ENCODE measurements at regions of chr7 and their contacts with region 1.

Region 1: DNA sequence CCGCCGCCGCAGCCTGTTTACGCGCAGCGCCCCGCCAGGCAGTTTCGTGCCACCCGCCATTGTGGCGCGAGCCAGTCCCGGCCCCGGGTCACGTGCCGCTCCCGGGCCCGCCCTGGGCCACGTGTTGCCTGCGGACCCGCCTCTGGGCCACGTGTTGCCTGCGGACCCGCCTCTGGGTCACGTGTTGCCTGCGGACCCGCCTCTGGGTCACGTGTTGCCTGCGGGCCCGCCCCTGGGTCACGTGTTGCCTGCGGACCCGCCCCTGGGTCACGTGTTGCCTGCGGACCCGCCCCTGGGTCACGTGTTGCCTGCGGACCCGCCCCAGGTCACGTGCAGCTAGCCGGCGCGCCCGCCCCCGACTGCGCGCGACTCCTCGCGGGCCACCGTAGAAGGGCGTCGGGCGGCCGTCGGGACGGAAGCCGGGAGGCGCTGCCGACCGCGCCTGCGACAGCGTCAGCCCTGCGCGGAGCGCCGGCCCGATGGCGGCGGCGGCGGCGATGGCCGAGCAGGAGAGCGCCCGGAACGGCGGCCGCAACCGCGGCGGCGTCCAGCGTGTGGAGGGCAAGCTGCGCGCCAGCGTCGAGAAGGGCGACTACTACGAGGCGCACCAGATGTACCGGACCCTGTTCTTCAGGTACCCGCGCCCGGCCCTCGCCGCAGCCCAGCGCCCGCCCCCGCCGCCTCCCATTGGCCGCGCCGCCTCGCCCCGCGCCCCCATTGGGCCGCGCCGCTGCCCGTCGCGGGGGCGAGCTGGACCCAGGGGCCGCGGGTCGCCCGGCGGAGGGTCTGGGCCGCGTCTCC is at the start of gene GET4:
- DNase-seq: peak; percentile 88 to 98
- H3K4me3 ChIP-seq: peak within 1 kb of the TSS; percentile 88 to 91
- H3K27ac ChIP-seq: peak within 1 kb of the TSS; percentile 78 to 86
- H3K4me1 ChIP-seq: peaks cover 5 to 23% of the 10 kb centered on the region in 2 donors
- H3K27me3 ChIP-seq: no peaks in the 10 kb centered on the region
- CTCF ChIP-seq: peak; percentile 19 to 45 (median 42)
- total RNA-seq, gene GET4: 4.2 TPM

Region 2: DNA sequence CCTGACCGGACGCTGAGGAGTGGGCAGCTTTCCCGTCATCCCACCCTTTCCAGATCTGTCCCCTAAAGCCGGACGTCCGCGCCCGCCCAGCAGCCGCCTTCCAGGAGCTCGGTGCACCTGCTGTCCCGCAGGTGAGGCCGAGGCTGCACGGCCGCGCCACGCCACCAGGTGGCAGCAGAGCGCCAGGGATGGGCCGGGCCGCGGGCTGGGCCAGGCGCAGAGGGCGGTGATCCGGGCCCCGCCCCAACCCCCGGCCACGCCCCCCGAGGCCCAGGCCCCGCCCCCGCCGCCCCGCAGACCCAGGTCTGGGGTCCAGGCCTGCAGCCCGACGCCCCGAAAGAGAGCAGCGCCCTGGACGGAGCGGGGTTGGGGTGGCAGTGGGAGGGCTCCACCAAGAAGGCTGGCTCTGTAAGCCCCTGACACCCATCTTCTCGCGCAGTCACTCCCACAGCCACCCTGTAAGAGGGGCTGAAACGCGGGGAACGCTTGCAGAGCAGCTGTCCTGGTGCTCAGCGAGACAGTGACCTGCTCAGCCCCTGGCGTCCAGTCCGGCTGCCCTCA is 554.2 kb before region 1 on chr7:
- intact Hi-C with region 1: loop called (anchors 10 kb)
- DNase-seq: peak in 1 of 2 donors; percentile 83
- H3K4me3 ChIP-seq: no peak overlapping the region
- H3K27ac ChIP-seq: no peak overlapping the region
- H3K4me1 ChIP-seq: peaks cover 0 to 4% of the 10 kb centered on the region in 2 donors
- H3K27me3 ChIP-seq: no peaks in the 10 kb centered on the region
- CTCF ChIP-seq: peak; percentile 86 to 94 (median 90)

Region 3: GRCh38 chr7:517774-518629 is 358.4 kb before region 1 on chr7:
- intact Hi-C with region 1: no loop called
- DNase-seq: peak in 1 of 2 donors; percentile 85
- H3K4me3 ChIP-seq: peak overlapping the region; percentile 77 to 83
- H3K27ac ChIP-seq: peak overlapping the region; percentile 97
- H3K4me1 ChIP-seq: peaks cover 23 to 53% of the 10 kb centered on the region in 2 donors
- H3K27me3 ChIP-seq: no peaks in the 10 kb centered on the region
- CTCF ChIP-seq: no peak

Region 4: DNA sequence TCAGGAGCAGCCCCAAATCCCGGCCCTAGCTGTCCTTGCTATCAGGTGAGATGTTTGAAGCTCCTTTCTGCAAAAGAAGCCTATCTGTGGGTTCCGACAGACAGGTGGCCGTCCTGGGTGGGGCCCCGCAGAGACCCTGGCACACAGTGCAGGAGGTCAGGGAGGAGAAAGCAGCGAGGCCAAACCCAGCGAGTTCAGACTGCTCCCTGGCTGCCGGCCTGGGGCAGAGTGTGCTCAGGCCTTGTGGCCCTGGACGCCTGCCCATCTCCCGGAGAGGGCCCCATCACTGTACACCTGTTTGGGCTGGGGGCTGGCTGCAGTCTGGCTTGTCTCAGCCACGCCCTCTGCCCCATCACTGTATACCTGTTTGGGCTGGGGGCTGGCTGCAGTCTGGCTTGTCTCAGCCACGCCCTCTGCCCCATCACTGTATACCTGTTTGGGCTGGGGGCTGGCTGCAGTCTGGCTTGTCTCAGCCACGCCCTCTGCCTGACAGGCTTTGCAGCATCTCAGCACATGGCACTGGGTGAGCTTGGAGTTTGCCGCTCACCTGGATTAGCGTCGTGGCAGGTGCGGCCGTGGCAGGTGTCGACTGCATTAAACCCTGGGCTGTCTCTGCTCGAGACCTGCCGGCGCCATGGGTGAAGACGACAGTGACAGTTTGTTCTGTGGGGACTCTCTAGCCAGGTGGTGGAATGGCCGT is 137.5 kb before region 1 on chr7:
- intact Hi-C with region 1: no loop called
- DNase-seq: no peak
- H3K4me3 ChIP-seq: no peak overlapping the region
- H3K27ac ChIP-seq: no peak overlapping the region
- H3K4me1 ChIP-seq: no peaks in the 10 kb centered on the region
- H3K27me3 ChIP-seq: no peaks in the 10 kb centered on the region
- CTCF ChIP-seq: no peak

Region 5: DNA sequence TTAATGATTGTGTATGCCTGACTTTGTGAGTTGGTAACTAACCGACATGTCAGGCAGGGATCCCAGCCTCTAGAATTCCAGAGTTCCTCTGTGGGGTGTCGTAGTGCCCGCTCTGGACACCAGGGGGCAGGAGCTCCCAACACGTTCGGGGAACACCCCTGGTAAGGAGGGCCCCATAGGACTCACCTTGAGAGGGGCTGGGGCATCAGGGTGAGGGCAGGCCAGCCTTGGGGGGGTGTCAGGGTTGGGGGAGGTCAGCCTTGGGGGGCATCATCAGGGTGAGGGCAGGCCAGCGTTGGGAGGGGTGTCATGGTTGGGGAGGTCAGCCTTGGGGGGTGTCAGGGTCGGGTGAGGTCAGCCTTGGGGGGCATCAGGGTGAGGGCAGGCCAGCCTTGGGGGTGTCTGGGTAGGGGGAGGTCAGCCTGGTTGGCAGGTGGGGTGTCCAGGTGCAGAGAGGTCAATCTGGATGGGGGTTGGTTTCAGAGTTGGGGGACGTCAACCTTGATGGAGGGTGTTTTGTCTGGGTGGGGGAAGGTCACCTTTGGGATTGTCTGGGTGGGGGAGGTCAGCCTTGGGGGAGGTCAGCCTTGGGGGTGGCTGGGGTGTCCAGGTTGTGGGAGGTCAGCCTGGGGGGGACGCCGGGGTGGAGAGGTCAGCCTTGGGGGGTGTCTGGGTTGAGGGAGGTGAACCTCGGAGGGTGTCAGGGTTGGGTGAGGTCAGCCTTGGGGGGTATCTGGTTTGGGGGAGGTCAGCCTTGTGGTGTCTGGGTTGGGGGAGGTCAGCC is 89.7 kb before region 1 on chr7:
- intact Hi-C with region 1: loop called (anchors 1 kb)
- DNase-seq: peak in 1 of 2 donors; percentile 82
- H3K4me3 ChIP-seq: no peak overlapping the region
- H3K27ac ChIP-seq: no peak overlapping the region
- H3K4me1 ChIP-seq: peaks cover 0 to 4% of the 10 kb centered on the region in 2 donors
- H3K27me3 ChIP-seq: no peaks in the 10 kb centered on the region
- CTCF ChIP-seq: peak; percentile 91 to 95 (median 95)

Region 6: GRCh38 chr7:1112109-1112508 is 235.7 kb after region 1 on chr7:
- intact Hi-C with region 1: no loop called
- DNase-seq: no peak
- H3K4me3 ChIP-seq: no peak overlapping the region
- H3K27ac ChIP-seq: no peak overlapping the region
- H3K4me1 ChIP-seq: no peaks in the 10 kb centered on the region
- H3K27me3 ChIP-seq: no peaks in the 10 kb centered on the region
- CTCF ChIP-seq: no peak

Region 7: GRCh38 chr7:1159891-1160668 is 283.7 kb after region 1 on chr7 and contains the start of gene ZFAND2A:
- intact Hi-C with region 1: loop called (anchors 2 kb)
- DNase-seq: peak; percentile 96 to 99
- H3K4me3 ChIP-seq: peak within 1 kb of the TSS; percentile 88 to 96
- H3K27ac ChIP-seq: peak within 1 kb of the TSS; percentile 87 to 96
- H3K4me1 ChIP-seq: peaks cover 0 to 15% of the 10 kb centered on the region in 2 donors
- H3K27me3 ChIP-seq: no peaks in the 10 kb centered on the region
- CTCF ChIP-seq: no peak
- total RNA-seq, gene ZFAND2A: 5.6 TPM

Region 8: GRCh38 chr7:1532483-1533424 is 656.4 kb after region 1 on chr7:
- intact Hi-C with region 1: loop called (anchors 10 kb)
- DNase-seq: peak; percentile 88 to 96
- H3K4me3 ChIP-seq: peak overlapping the region; percentile 76 to 91
- H3K27ac ChIP-seq: peak overlapping the region; percentile 98 to 99
- H3K4me1 ChIP-seq: peaks cover 9 to 40% of the 10 kb centered on the region in 2 donors
- H3K27me3 ChIP-seq: no peaks in the 10 kb centered on the region
- CTCF ChIP-seq: no peak

Measured in ascending aorta (tissue), 2 donors.